ENCODE measurements at regions of chr1 and their contacts with region 1.

Region 1: DNA sequence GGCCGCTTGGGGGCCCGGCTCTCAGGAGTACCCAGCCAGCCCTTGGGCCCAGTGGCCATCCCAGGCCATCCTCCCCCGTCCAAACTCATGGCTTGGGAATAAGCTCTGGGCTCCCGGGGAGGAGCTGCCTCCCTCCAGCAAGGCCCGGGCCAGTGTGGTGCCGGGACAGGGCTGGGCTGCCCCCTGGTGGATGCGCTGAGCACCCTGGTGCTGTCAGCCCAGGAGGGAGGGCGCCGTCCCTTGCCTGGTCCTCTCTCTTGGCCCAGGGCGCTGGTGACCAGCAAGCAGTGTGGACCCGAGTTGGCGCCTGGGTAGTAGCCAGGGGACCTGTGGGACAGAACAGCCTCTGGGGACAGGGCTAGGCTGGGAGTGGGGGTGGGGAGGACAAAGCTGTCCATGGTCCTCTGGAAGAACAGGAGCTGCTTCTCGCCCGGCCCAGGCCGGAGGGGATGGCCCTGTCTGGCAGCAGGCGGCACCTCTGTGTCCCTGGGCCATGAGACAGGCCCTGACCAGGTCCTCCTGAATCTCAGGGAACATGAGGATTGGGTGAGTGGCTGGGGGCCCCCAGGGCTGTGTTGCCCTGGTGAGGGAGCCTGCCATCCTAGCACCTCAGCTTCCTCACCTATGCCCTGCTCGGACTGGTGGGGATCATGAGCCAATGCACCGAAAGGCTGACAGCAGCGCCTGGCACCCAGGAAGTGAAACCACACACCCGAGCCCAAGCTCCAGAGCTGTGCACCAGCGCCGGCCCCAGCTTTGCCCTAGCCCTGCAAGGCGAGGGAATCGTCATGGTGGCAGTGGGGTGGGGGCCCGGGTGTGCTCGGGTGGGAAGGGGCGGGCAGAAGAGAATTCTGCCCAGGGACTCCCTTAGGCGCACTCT is 9.4 kb downstream of the MORN1 start:
- DNase-seq: peak; percentile 67 to 89
- ATAC-seq: peak; percentile 90 to 98
- H3K4me3 ChIP-seq: no peak overlapping the region
- H3K27ac ChIP-seq: no peak overlapping the region
- H3K4me1 ChIP-seq: no peaks in the 10 kb centered on the region
- CTCF ChIP-seq: peak; percentile 68
- EP300 ChIP-seq: no peak
- POLR2A ChIP-seq: no peak
- RAD21 ChIP-seq: peak; percentile 76 to 82

Region 2: GRCh38 chr1:2205191-2205952 is 176.6 kb before region 1 on chr1:
- CTCF ChIA-PET with region 1: interaction called, 267 read pairs
- POLR2A ChIA-PET with region 1: no interaction called
- DNase-seq: peak in 1 of 2 experiments; percentile 92
- ATAC-seq: peak; percentile 36 to 51; a peak in 5 of 6 replicates
- H3K4me3 ChIP-seq: peak overlapping the region; percentile 53
- H3K27ac ChIP-seq: peak overlapping the region; percentile 85 to 86
- H3K4me1 ChIP-seq: peaks cover 52% of the 10 kb centered on the region
- CTCF ChIP-seq: no peak
- EP300 ChIP-seq: no peak
- POLR2A ChIP-seq: 0 out of 2 replicates have a peak, but pooled peaks have one; percentile 13
- RAD21 ChIP-seq: no peak

Region 3: DNA sequence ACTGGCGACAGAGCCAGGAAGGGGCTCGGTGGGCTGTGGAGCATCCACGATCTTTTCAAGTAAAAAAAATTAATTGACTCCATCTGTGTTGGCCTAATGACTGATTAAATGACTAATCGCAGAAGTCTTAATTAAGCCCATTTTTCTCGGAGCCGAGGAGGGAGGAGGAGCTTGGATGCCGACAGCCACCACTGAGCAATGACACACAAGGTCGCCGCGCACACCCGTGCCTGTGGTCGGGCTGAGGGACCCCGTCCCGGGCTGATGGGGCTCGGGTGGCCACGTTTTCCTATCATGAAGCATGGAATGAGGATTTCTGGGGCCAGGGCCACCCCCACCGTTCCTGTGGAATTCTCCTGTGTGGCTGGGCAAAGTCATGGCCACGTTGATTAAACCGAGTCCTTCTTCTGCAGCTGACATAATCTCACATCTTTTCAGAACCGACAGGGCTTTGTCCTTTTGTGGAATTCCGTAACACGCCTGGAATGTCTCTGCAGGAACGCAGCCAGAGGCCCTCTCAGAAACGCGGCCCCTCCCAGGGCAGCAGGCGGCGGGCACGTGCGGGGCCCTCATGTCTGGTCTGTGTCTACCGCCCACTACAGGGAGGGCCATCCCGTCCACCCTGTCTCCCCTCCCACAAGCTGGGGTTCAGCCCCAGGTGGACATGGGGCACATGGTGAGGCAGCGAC is 51.3 kb before region 1 on chr1:
- CTCF ChIA-PET with region 1: no interaction called
- POLR2A ChIA-PET with region 1: no interaction called
- DNase-seq: no peak
- ATAC-seq: no peak
- H3K4me3 ChIP-seq: no peak overlapping the region
- H3K27ac ChIP-seq: no peak overlapping the region
- H3K4me1 ChIP-seq: 0 out of 3 replicates have a peak, but pooled peaks cover 5% of the 10 kb centered on the region
- CTCF ChIP-seq: no peak
- EP300 ChIP-seq: no peak
- POLR2A ChIP-seq: no peak
- RAD21 ChIP-seq: no peak

Region 4: DNA sequence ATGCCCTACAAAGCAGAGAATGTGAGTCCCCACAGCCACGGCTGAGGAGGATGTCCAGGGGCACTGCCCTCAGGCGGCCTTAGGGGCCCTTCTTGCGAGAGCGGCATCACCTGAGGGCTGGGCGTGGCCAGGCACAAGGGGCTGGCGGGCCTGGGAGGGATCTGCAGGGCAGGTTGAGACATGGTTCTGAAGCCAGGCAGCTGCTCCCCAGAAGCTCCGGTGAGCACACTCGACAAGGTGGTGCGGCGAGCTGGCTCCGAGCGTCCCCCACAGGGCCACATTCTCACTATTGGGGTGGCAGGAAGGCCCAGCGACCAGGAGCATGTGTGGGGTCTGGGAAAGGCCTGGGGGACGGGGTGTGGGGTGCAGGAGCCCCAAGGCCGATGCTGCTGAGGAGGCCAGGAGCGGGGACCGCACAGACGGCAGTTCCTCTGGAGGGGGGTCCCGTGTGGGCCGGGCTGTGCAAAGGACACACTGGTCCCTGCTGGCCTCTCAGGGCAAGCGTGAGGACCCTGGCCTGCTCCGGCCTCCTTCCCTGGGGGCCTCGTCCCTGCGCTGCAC is 37.8 kb before region 1 on chr1:
- CTCF ChIA-PET with region 1: no interaction called
- POLR2A ChIA-PET with region 1: no interaction called
- DNase-seq: no peak
- ATAC-seq: no peak
- H3K4me3 ChIP-seq: no peak overlapping the region
- H3K27ac ChIP-seq: no peak overlapping the region
- H3K4me1 ChIP-seq: no peaks in the 10 kb centered on the region
- CTCF ChIP-seq: no peak
- EP300 ChIP-seq: no peak
- POLR2A ChIP-seq: no peak
- RAD21 ChIP-seq: no peak

Region 5: GRCh38 chr1:2363847-2364513 is 18.0 kb before region 1 on chr1:
- CTCF ChIA-PET with region 1: interaction called, 15 read pairs
- POLR2A ChIA-PET with region 1: no interaction called
- DNase-seq: no peak
- ATAC-seq: no peak
- H3K4me3 ChIP-seq: no peak overlapping the region
- H3K27ac ChIP-seq: no peak overlapping the region
- H3K4me1 ChIP-seq: no peaks in the 10 kb centered on the region
- CTCF ChIP-seq: no peak
- EP300 ChIP-seq: no peak
- POLR2A ChIP-seq: no peak
- RAD21 ChIP-seq: no peak

Region 6: DNA sequence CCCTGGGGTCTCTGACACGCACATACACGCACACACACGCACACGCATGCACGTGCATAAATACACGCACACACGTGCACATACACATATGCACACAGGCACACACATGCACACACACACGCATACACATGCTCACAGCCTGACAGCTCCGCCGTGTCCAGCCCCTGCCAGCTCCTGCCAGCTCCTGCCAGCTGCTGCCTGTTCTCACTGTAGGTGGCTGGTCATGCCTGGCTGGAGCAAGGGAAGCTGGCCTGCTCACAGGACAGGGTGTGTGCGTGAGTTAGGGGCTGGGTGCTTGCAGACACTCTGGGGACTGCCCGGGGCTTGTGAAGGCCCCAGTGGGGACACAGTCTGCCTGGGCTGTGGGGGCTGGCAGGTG is 99.0 kb after region 1 on chr1:
- CTCF ChIA-PET with region 1: no interaction called
- POLR2A ChIA-PET with region 1: no interaction called
- DNase-seq: no peak
- ATAC-seq: peak; percentile 5 to 26; a peak in 1 of 6 replicates
- H3K4me3 ChIP-seq: no peak overlapping the region
- H3K27ac ChIP-seq: no peak overlapping the region
- H3K4me1 ChIP-seq: no peaks in the 10 kb centered on the region
- CTCF ChIP-seq: no peak
- EP300 ChIP-seq: no peak
- POLR2A ChIP-seq: no peak
- RAD21 ChIP-seq: no peak